ENCODE measurements at regions of chr15 and their contacts with region 1.

Region 1: DNA sequence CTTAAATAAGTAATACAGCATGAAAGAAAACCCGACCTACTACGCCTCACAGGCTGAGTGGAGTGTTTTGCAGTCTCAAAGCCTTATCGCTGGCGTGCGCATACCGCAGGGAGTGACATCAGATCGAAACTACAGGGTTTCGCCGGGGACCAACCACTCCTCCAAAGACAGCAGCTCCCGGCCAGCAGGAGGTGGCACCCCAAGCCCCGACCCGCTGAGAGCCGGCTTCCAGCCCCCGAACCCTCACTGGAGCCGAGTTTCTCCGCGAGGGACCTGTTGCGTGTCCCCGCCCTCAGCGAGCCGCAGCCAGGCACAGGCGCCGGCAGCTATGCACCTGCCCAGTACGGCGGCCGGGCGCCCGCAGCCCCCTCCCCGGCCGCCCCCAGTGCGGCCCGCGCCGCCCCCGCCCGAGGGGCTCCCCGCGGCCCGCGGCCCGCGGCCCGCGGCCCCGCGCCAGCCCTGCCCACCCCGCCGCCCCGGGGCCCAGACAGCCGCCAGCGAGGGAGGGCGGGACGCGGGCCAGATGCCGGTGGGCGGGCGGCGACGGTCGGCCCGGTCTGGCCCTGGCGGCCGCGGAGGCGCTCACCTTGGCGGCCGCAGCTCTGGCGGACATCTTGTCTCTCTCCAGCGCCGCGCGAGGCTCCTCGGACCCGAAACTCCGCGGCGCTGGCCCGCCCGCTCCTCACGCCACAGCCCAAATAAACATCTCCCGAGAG is 694 bp downstream of the TJP1 start:
- DNase-seq: peak; percentile 46

Region 2: GRCh38 chr15:29870495-29871151 is 49.0 kb after region 1 on chr15:
- CTCF ChIA-PET with region 1: interaction called, 4 read pairs
- POLR2A ChIA-PET with region 1: interaction called, 10 read pairs
- DNase-seq: peak; percentile 13